ENCODE measurements at regions of chr6 and their contacts with region 1.

Region 1: GRCh38 chr6:33271458-33272274 is at the starts of genes RPS18 and VPS52:
- DNase-seq: peak; percentile 94
- H3K4me3 Mint-ChIP-seq: peak within 1 kb of the TSS; percentile 94
- H3K27ac Mint-ChIP-seq: peak within 1 kb of the TSS; percentile 98
- H3K4me1 Mint-ChIP-seq: peaks cover 42% of the 10 kb centered on the region
- H3K27me3 Mint-ChIP-seq: no peaks in the 10 kb centered on the region
- total RNA-seq, gene RPS18: 4,372 to 4,391 TPM
- total RNA-seq, gene VPS52: 32.7 to 33.7 TPM

Region 2: GRCh38 chr6:33172688-33173534 is 98.8 kb before region 1 on chr6:
- CTCF ChIA-PET with region 1: no interaction called
- POLR2A ChIA-PET with region 1: no interaction called
- intact Hi-C with region 1: no loop called
- DNase-seq: peak; percentile 15
- H3K4me3 Mint-ChIP-seq: no peak overlapping the region
- H3K27ac Mint-ChIP-seq: no peak overlapping the region
- H3K4me1 Mint-ChIP-seq: no peaks in the 10 kb centered on the region
- H3K27me3 Mint-ChIP-seq: peaks cover 7% of the 10 kb centered on the region

Region 3: DNA sequence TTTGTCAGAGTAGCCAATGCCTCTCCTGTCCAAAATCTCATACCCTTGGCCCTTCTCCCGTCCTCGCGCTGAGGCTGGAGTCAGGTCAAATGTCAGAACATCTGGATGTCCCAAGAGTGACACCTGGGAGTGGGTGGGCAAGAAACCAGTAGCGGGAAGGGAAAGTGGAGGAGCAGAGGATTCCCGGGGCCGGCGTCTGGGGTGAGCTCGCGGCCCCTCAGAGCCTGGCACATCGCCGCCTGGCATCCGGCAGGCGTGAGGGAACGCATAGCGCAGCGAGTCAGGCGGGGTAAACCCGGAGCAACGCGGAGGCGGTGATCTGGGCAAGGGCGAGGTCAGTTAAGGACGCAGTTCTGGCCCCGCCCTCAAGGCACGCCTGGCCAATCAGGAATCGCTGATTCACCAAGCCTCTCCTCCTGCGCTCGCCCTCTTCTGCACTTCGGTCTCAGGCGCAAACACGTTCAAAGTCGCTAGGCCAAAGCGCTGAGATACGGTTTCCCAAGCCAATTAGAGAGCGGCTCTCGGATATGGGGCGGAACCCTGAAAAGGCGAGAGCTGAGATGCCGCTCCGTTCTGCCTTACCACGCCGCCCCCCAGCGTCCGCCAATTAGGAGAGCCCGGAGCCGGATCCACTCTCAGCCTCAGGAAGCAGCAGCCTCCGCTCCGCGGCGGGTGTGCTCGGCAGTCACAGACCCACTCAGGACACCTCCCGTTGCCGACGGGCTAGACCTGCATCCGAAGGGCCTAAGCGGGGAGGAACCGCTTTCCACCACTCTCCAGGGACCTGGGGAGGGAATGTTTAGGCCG is 22.5 kb before region 1 on chr6:
- CTCF ChIA-PET with region 1: interaction called, 21 read pairs
- POLR2A ChIA-PET with region 1: interaction called, 16 read pairs
- intact Hi-C with region 1: loop called (anchors 1 kb)
- DNase-seq: peak; percentile 99
- H3K4me3 Mint-ChIP-seq: peak overlapping the region; percentile 88
- H3K27ac Mint-ChIP-seq: peak overlapping the region; percentile 90
- H3K4me1 Mint-ChIP-seq: peaks cover 43% of the 10 kb centered on the region
- H3K27me3 Mint-ChIP-seq: peaks cover 3% of the 10 kb centered on the region

Region 4: DNA sequence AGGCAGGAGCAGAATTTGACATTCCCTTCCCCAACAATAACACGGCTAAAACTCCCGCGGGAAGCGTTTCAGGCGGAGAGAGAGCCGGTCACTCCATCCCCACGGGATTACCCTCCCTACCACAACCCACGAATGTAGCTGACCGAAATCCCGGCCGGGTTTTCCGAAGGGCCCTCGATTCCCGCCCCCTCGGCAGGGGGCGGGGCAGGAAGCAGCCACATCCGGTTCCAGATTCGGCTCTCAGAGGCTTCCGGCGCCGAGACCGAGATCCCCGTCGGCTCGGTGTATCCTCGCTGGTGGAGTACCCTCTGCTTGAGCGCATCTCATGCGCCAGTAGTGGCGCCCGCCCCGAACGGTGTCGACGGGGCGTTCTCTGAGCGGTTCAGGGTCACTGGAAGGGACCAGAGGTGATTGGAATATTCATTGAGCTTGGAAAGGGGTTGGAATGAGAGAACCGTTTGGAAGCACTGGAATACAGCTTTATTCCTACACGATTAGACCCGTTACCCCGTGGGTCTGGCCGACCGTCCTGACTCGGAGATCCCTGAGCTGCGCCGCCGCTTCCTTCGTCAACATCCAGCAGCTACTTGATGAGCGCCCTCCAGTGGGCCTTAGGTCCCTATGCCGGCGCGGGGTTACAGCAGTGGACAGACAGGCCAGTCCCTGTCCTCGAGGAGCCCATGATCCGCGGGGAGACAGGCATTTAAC is 27.7 kb after region 1 on chr6:
- CTCF ChIA-PET with region 1: interaction called, 31 read pairs
- POLR2A ChIA-PET with region 1: interaction called, 26 read pairs
- intact Hi-C with region 1: loop called (anchors 1 kb)
- DNase-seq: peak; percentile 96
- H3K4me3 Mint-ChIP-seq: peak overlapping the region; percentile 89
- H3K27ac Mint-ChIP-seq: peak overlapping the region; percentile 96
- H3K4me1 Mint-ChIP-seq: peaks cover 30% of the 10 kb centered on the region
- H3K27me3 Mint-ChIP-seq: no peaks in the 10 kb centered on the region

Region 5: DNA sequence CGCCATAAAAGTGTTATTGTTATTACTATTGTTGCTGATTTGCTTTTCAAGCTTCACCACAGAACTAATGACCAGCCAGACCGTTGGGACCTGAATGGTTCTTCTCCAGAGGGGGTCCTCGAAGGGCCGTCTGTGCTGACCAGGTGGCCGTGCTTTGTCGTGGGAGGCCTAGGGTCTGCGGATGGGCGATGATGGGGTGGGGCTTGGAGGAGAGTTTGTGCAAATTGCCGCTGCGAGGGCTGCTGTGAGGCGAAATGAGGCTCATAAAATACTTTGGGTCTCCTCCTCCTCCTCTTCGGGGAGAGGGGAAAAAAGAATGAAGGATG is 51.9 kb after region 1 on chr6:
- CTCF ChIA-PET with region 1: interaction called, 8 read pairs
- POLR2A ChIA-PET with region 1: interaction called, 14 read pairs
- intact Hi-C with region 1: loop called (anchors 1 kb)
- DNase-seq: no peak
- H3K4me3 Mint-ChIP-seq: peak overlapping the region; percentile 89
- H3K27ac Mint-ChIP-seq: peak overlapping the region; percentile 98
- H3K4me1 Mint-ChIP-seq: peaks cover 47% of the 10 kb centered on the region
- H3K27me3 Mint-ChIP-seq: no peaks in the 10 kb centered on the region

Region 6: DNA sequence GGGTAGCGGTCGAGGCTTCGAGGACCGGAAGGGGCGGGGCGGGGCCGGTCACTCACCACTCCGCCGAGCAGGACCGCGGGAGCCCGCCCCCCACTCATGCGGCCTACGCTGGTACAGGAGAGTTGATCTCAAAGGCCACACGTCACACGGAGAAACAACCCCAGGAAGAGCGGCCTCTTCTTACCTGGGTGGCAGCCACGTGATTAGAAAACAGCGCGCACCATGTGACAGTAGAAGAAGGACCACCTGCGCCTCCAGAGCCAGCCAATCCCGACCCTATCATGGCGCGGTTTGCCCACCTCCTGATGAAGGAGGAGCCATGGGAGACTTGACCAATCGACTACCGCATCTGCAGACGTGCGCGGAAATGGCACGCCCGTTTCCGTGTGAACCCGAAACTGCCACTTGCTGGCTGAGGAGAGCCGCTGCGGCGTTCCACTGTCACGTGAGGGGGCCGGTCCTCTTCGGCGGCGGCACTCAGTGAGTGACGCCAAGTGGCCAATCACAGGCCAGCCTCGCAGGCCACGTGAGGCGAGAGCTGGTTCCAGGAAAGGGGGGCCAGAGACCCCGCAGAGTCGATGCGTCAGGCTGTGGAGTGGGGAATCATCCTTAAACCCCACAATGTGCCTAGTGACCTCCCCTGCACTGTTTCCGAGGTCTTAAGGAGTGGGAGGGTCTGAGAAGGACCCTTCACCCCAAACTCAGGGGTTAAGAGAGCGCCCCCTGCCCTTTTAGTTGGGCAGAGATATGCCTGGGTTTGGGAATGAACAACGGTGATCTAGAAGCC is 146.4 kb after region 1 on chr6 and contains the start of gene CUTA:
- CTCF ChIA-PET with region 1: no interaction called
- POLR2A ChIA-PET with region 1: interaction called, 5 read pairs
- intact Hi-C with region 1: loop called (anchors 2 kb)
- DNase-seq: peak; percentile 100
- H3K4me3 Mint-ChIP-seq: peak within 1 kb of the TSS; percentile 94
- H3K27ac Mint-ChIP-seq: peak within 1 kb of the TSS; percentile 99
- H3K4me1 Mint-ChIP-seq: peaks cover 56% of the 10 kb centered on the region
- H3K27me3 Mint-ChIP-seq: no peaks in the 10 kb centered on the region
- total RNA-seq, gene CUTA: 190 to 198 TPM

Measured in activated CD4-positive, alpha-beta memory T cell treated with anti-CD3 and anti-CD28 coated beads for 36 hours (primary cell).